Activated CD4-positive, alpha-beta memory T cell treated with anti-CD3 and anti-CD28 coated beads for 36 hours (primary cell): ENCODE measurements at regions of chrX and their contacts with region 1.

Region 1: DNA sequence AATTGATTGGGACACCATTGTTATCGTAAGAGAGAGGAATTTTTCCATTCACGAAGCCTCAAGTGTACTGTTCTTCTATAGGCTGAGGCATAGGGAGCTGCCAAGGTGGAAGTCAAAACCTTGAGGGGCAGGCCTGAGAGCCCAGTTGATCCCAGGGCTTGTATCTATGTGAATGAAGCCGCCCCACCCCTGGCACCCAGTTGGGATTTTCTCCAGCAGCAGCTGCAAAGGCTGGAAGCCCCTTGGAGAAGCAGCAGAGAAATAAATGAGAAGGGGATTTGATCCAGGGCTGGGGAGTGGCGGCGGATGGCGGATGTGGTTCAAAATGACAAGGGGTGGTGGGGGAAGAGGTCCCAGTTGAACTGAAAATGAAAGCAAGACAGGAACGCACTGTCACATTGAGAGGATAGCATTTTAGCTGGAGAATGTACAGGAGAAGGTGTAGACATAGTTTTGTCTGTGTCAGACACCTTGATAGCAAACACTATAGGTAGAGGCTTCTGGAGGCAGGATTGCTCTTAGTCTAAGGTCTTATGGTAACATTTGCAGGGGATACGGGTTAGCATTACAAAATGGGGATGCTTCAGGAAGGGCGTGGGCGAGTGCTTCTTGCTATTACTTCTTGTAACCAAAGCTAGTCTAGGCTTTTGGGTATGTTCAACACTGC is 32.6 kb downstream of the DOCK11 start:
- DNase-seq: peak; percentile 74
- H3K4me3 Mint-ChIP-seq: peak overlapping the region; percentile 85
- H3K27ac Mint-ChIP-seq: peak overlapping the region; percentile 99
- H3K4me1 Mint-ChIP-seq: peaks cover 74% of the 10 kb centered on the region
- H3K27me3 Mint-ChIP-seq: no peaks in the 10 kb centered on the region

Region 2: GRCh38 chrX:118345401-118346257 is 182.6 kb before region 1 on chrX and contains the start of gene WDR44:
- CTCF ChIA-PET with region 1: no interaction called
- POLR2A ChIA-PET with region 1: no interaction called
- intact Hi-C with region 1: loop called (anchors 5 kb)
- DNase-seq: peak; percentile 96
- H3K4me3 Mint-ChIP-seq: peak within 1 kb of the TSS; percentile 96
- H3K27ac Mint-ChIP-seq: peak within 1 kb of the TSS; percentile 98
- H3K4me1 Mint-ChIP-seq: peaks cover 32% of the 10 kb centered on the region
- H3K27me3 Mint-ChIP-seq: no peaks in the 10 kb centered on the region
- total RNA-seq, gene WDR44: 8.2 to 9.2 TPM

Region 3: GRCh38 chrX:118495061-118495921 is 32.9 kb before region 1 on chrX and contains the start of gene DOCK11:
- CTCF ChIA-PET with region 1: interaction called, 6 read pairs
- POLR2A ChIA-PET with region 1: interaction called, 36 read pairs
- intact Hi-C with region 1: loop called (anchors 1 kb)
- DNase-seq: peak; percentile 90
- H3K4me3 Mint-ChIP-seq: peak within 1 kb of the TSS; percentile 99
- H3K27ac Mint-ChIP-seq: peak within 1 kb of the TSS; percentile 97
- H3K4me1 Mint-ChIP-seq: peaks cover 24% of the 10 kb centered on the region
- H3K27me3 Mint-ChIP-seq: no peaks in the 10 kb centered on the region
- total RNA-seq, gene DOCK11: 47.5 to 50.4 TPM

Region 4: DNA sequence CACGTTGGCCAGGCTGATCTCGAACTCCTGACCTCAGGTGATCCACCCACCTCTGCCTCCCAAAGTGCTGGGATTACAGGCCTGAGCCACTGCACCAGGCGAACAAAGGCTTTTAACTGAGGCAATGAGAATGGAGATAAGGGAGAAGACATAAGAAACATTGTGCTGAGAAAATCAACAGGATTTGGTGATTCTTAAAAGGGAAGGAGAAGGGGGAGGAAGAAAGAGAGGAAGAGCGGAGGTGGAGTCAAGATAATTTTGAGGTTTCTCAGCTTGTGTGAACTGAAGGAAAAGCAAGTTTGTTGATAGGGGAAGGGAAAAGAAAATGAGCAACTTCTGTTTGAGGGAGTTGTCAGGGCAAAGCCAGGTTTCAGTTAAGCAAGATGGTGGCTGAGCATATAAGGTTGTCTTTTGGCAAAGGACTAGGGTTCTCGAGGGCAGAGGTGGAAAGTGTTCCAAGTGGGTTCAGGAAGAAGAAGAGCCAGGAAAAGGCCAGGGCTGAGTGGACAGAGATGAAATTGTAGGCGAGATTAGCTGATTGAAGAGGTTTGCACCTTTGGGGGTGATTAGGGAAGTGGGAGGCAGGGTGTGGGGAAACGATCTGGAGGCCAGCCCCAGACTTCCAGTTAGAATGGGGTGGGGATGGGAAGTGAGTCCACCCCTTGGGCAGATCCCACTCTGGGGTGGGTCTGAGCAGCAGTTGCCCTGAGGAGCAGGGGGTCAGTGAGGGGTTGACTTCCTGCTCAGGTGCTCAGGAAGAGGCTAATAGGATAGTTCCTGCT is 24.8 kb before region 1 on chrX:
- CTCF ChIA-PET with region 1: interaction called, 5 read pairs
- POLR2A ChIA-PET with region 1: interaction called, 4 read pairs
- intact Hi-C with region 1: loop called (anchors 1 kb)
- DNase-seq: no peak
- H3K4me3 Mint-ChIP-seq: peak overlapping the region; percentile 56
- H3K27ac Mint-ChIP-seq: peak overlapping the region; percentile 95
- H3K4me1 Mint-ChIP-seq: peaks cover 54% of the 10 kb centered on the region
- H3K27me3 Mint-ChIP-seq: no peaks in the 10 kb centered on the region

Region 5: DNA sequence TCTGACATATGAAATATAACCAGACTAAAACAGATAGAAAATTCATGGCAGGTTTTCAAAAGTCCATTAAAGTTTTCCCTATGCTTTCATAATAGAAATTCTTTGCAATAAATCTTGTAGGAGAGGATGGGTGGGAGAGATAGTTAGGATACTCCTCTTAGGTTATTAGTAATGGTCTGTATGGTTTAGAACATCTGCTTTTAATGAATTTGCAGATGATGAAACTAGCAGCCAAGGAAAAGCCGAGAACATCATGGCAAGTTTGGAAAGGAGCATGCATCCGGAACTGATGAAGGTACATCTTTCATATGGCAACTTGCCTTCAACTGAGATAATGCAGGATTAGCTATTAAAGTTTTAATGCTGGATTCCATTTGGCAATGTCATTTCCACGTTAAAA is 38.2 kb after region 1 on chrX:
- CTCF ChIA-PET with region 1: no interaction called
- POLR2A ChIA-PET with region 1: interaction called, 3 read pairs
- intact Hi-C with region 1: loop called (anchors 5 kb)
- DNase-seq: no peak
- H3K4me3 Mint-ChIP-seq: no peak overlapping the region
- H3K27ac Mint-ChIP-seq: no peak overlapping the region
- H3K4me1 Mint-ChIP-seq: peaks cover 41% of the 10 kb centered on the region
- H3K27me3 Mint-ChIP-seq: no peaks in the 10 kb centered on the region

Region 6: GRCh38 chrX:119235872-119236622 is 707.8 kb after region 1 on chrX and contains the start of gene PGRMC1:
- CTCF ChIA-PET with region 1: no interaction called
- POLR2A ChIA-PET with region 1: no interaction called
- intact Hi-C with region 1: loop called (anchors 10 kb)
- DNase-seq: peak; percentile 83
- H3K4me3 Mint-ChIP-seq: peak within 1 kb of the TSS; percentile 80
- H3K27ac Mint-ChIP-seq: peak within 1 kb of the TSS; percentile 79
- H3K4me1 Mint-ChIP-seq: peaks cover 24% of the 10 kb centered on the region
- H3K27me3 Mint-ChIP-seq: peaks cover 2% of the 10 kb centered on the region
- total RNA-seq, gene PGRMC1: 29.0 to 29.4 TPM